Panc1 (cell line): ENCODE measurements at regions of chr1 and their contacts with region 1.

Region 1: DNA sequence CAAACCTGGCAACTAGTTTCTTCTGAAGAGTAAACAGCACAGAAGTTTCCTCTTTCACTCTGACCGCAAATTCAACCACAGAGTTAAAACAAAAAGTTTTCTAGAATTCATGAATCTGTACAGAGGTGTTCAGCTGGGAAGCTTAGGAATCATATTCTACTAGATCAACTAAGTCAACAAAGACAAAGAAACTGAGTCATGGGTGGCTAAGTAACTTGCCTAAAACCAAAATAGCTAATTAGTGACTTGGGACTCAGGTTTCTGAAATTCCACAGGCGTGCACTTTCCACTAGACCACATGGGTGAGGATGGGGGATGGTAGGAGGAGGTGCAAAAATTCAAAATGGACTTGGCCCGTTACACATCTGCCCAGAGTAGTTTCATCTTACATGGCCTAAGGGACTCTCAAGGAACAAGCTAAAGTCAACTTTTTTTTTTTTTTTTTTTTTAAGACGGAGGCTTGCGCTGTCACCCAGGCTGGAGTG is 25.8 kb downstream of the PTPN14 start:
- DNase-seq: no peak
- ATAC-seq: no peak
- H3K4me3 ChIP-seq: no peak overlapping the region
- H3K27ac ChIP-seq: peak overlapping the region; percentile 68
- H3K4me1 ChIP-seq: peaks cover 73% of the 10 kb centered on the region
- H3K27me3 ChIP-seq: no peaks in the 10 kb centered on the region
- CTCF ChIP-seq: no peak

Region 2: DNA sequence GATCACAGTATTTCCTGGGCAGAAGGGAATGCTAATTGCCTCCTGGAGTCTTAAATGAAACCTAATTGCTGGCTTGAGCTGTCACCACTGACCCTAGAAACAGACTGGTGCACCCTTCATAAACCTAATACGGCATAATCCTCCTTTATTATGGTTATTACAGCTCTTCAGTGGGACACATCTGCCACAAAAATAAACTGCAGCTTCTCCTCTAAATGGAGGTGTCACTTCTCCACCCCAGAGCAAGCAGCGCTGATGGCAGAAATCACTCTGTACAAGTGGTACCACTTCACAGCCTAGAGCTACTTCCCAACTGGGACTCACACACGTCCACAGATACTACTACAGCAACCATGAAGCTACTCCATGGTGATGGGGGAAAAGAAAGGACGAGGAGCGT is 14.7 kb after region 1 on chr1:
- CTCF ChIA-PET with region 1: no interaction called
- POLR2A ChIA-PET with region 1: interaction called, 13 read pairs
- in situ Hi-C with region 1: no loop called
- intact Hi-C with region 1: no loop called
- DNase-seq: no peak
- ATAC-seq: no peak; the same call in 1 of the 2 replicates
- H3K4me3 ChIP-seq: no peak overlapping the region
- H3K27ac ChIP-seq: peak overlapping the region; percentile 59
- H3K4me1 ChIP-seq: peaks cover 79% of the 10 kb centered on the region
- H3K27me3 ChIP-seq: no peaks in the 10 kb centered on the region
- CTCF ChIP-seq: no peak